SK-N-SH (cell line): ENCODE measurements at regions of chr7 and their contacts with region 1.

Region 1: DNA sequence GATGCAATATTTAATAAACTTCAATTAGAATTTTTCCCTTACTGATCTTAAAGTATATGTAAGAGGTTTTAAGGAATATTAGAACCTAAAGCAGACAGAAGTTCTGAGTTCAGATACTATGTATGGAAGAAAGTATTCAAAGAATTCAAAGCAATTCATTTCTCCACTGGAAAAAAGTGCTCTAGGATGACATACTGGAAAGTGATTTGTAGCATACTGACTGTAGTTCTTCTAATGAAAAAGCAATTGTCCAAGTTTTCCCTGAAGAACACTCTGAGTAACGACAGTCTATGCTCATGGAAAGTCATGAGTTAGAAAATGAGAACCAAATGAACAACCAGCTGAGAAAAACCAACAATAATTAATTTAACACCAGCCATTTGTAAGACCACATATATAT is 180.8 kb upstream of the SLC26A5 start:
- DNase-seq: no peak
- H3K4me3 ChIP-seq: no peak overlapping the region
- H3K27ac ChIP-seq: no peak overlapping the region
- H3K4me1 ChIP-seq: no peaks in the 10 kb centered on the region; a peak in 1 of 4 replicates
- H3K27me3 ChIP-seq: no peaks in the 10 kb centered on the region
- CTCF ChIP-seq: no peak
- EP300 ChIP-seq: no peak
- RAD21 ChIP-seq: no peak

Region 2: GRCh38 chr7:103613655-103614642 is 12.8 kb before region 1 on chr7:
- CTCF ChIA-PET with region 1: interaction called, 11 read pairs
- POLR2A ChIA-PET with region 1: no interaction called
- DNase-seq: peak; percentile 33
- H3K4me3 ChIP-seq: no peak overlapping the region
- H3K27ac ChIP-seq: peak overlapping the region in 1 of 2 experiments; percentile 16; a peak in 1 of 4 replicates
- H3K4me1 ChIP-seq: peaks cover 0 to 2% of the 10 kb centered on the region in 2 experiments; a peak in 2 of 4 replicates
- H3K27me3 ChIP-seq: no peaks in the 10 kb centered on the region
- CTCF ChIP-seq: peak; percentile 59
- EP300 ChIP-seq: no peak
- RAD21 ChIP-seq: peak; percentile 70